Natural killer cell (primary cell): ENCODE measurements at regions of chr3 and their contacts with region 1.

Region 1: DNA sequence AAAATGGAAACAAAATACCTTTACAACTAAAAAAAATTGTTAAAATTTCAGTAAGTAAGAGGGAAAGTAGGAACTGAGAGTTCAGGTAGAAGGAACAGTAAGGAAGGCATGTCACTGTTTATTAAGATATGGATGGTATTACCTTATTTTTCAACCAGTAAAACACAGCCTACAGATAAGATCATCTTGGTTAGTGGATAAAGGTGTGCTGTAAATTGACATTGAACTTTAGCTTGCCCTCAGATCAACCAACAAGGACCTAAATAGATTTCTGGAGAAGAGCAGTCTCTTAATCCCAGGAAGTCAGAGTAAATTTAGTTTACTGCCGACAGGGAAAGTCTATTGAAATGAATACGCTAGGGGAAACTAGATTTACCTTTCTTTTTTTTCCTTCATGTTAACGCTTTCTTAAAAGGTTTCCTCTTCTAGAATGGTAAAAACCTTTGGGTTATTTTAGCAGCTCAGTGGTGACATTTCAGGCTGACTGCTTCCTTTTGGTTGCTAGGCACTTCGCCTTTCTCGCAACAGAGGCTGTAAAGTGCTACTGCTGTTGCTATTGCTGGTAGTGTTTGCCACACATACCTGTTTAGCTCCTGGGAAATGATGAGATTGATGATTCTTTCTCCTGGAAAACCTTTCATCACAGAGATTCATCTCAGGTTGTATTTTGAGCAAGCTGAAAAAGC is 12.9 kb downstream of the DZIP3 start:
- DNase-seq: peak in 1 of 2 donors; percentile 76
- ATAC-seq: peak; percentile 82 to 92 (median 84)
- H3K4me3 ChIP-seq: peak overlapping the region; percentile 16
- H3K4me3 Mint-ChIP-seq: peak overlapping the region; percentile 79
- H3K27ac ChIP-seq: peak overlapping the region; percentile 90
- H3K27ac Mint-ChIP-seq: peak overlapping the region; percentile 86 to 92
- H3K4me1 ChIP-seq: peaks cover 15% of the 10 kb centered on the region
- H3K4me1 Mint-ChIP-seq: peaks cover 34 to 35% of the 10 kb centered on the region in 2 donors
- H3K27me3 ChIP-seq: no peaks in the 10 kb centered on the region
- H3K27me3 Mint-ChIP-seq: no peaks in the 10 kb centered on the region
- CTCF ChIP-seq: no peak

Region 2: DNA sequence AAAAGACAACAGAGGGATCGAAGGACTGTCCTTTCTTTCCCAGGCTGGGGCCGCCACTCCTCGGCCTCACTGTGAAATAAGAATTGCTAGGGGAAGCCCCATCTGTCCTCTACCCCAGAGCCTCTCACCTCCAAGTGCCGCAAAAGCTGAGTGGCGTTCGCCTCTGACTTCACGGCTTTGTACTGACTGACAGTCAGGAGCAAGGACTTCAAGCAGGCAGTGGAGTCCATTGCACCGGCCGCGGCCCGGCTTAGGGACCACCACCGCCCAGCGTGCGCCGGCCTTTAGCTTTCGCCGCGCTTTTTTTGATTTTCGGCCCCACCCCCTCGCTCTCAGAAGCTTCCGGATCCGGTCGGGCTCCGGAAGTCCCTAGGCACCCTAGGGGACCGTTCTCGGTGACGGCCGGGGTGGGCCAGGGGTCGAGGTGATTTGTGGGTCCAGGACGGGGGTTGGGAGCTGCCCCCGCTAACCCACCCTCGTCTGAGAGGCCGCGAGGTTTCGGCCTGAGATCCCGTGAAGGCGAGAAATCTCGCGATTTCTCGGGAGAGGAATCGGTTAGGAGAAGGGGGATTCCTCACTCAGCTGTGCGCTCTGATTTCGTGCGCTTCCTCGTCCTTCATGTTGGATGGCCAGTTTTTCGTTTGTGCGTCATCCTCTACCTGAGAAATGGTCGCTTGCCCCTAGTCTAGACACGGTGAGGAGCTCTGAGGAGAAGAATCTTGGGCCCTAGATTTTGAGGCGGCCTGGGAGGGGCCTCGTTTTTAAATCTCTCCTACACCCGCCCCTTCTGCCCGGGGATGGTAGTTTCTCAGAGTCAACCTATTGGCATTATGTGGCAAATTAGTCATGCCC is 13.0 kb before region 1 on chr3 and contains the starts of genes CIP2A and DZIP3:
- intact Hi-C with region 1: loop called (anchors 1 kb)
- DNase-seq: peak; percentile 84 to 95
- ATAC-seq: peak; percentile 77 to 91 (median 80)
- H3K4me3 ChIP-seq: peak within 1 kb of the TSS; percentile 95
- H3K4me3 Mint-ChIP-seq: peak within 1 kb of the TSS; percentile 97
- H3K27ac ChIP-seq: peak within 1 kb of the TSS; percentile 98
- H3K27ac Mint-ChIP-seq: peak within 1 kb of the TSS; percentile 95 to 99
- H3K4me1 ChIP-seq: peaks cover 8% of the 10 kb centered on the region
- H3K4me1 Mint-ChIP-seq: peaks cover 28 to 34% of the 10 kb centered on the region in 2 donors
- H3K27me3 ChIP-seq: no peaks in the 10 kb centered on the region
- H3K27me3 Mint-ChIP-seq: no peaks in the 10 kb centered on the region
- CTCF ChIP-seq: no peak
- total RNA-seq, gene CIP2A: 3.6 to 8.5 (median 3.6) TPM
- total RNA-seq, gene DZIP3: 12.0 to 24.8 (median 20.8) TPM